MCF 10A (cell line): ENCODE measurements at regions of chr10 and their contacts with region 1.

Region 1: GRCh38 chr10:16828114-16828568 is 10.9 kb upstream of the RSU1 start:
- DNase-seq: peak; percentile 90
- H3K4me3 Mint-ChIP-seq: no peak overlapping the region
- H3K27ac Mint-ChIP-seq: no peak overlapping the region
- H3K4me1 Mint-ChIP-seq: peaks cover 19% of the 10 kb centered on the region
- H3K27me3 Mint-ChIP-seq: no peaks in the 10 kb centered on the region
- CTCF ChIP-seq: peak; percentile 53

Region 2: DNA sequence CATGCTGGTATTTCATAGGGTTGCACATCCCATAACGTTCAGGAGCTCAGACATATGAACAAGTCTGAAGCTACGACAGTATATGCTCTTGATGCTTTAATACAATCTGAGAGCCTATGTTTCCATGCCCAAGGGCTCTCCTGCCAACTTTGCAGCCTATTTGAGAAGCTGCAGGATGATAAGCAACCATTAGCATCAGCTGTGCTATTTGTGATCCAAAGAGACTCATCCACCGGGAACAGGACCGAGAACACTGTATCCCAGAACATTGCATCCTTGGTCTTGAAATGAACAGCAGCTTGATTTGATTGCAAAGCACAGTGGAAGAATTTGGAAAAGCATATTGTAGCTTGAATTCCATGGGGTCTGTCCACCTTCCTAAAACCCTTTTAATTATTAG is 547.5 kb before region 1 on chr10:
- CTCF ChIA-PET with region 1: no interaction called
- POLR2A ChIA-PET with region 1: no interaction called
- intact Hi-C with region 1: no loop called
- DNase-seq: no peak
- H3K4me3 Mint-ChIP-seq: no peak overlapping the region
- H3K27ac Mint-ChIP-seq: no peak overlapping the region
- H3K4me1 Mint-ChIP-seq: no peaks in the 10 kb centered on the region
- H3K27me3 Mint-ChIP-seq: no peaks in the 10 kb centered on the region
- CTCF ChIP-seq: no peak

Region 3: GRCh38 chr10:16770670-16771069 is 57.5 kb before region 1 on chr10:
- CTCF ChIA-PET with region 1: no interaction called
- POLR2A ChIA-PET with region 1: no interaction called
- intact Hi-C with region 1: no loop called
- DNase-seq: no peak
- H3K4me3 Mint-ChIP-seq: no peak overlapping the region
- H3K27ac Mint-ChIP-seq: no peak overlapping the region
- H3K4me1 Mint-ChIP-seq: no peaks in the 10 kb centered on the region
- H3K27me3 Mint-ChIP-seq: no peaks in the 10 kb centered on the region
- CTCF ChIP-seq: no peak

Region 4: DNA sequence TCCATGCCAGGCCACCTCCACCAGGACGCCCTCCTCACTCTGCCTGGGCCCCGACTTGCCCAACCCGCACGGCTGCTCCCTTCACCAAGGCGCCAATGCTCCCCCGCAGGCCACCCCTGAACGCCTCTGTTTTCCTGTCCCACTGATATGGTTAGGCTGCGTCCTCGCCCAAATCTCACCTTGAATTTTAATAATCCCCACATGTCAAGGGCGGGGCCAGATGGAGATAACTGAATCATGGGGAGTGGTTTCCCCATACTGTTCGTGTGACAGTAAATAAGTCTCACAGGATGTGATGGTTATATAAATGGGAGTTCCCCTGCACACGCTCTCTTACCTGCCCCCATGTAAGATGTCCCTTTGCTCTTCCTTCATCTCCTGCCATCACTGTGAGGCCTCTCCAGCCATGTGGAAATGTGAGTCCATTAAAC is 40.8 kb before region 1 on chr10:
- CTCF ChIA-PET with region 1: no interaction called
- POLR2A ChIA-PET with region 1: no interaction called
- intact Hi-C with region 1: no loop called
- DNase-seq: no peak
- H3K4me3 Mint-ChIP-seq: no peak overlapping the region
- H3K27ac Mint-ChIP-seq: no peak overlapping the region
- H3K4me1 Mint-ChIP-seq: peaks cover 7% of the 10 kb centered on the region
- H3K27me3 Mint-ChIP-seq: no peaks in the 10 kb centered on the region
- CTCF ChIP-seq: no peak

Region 5: DNA sequence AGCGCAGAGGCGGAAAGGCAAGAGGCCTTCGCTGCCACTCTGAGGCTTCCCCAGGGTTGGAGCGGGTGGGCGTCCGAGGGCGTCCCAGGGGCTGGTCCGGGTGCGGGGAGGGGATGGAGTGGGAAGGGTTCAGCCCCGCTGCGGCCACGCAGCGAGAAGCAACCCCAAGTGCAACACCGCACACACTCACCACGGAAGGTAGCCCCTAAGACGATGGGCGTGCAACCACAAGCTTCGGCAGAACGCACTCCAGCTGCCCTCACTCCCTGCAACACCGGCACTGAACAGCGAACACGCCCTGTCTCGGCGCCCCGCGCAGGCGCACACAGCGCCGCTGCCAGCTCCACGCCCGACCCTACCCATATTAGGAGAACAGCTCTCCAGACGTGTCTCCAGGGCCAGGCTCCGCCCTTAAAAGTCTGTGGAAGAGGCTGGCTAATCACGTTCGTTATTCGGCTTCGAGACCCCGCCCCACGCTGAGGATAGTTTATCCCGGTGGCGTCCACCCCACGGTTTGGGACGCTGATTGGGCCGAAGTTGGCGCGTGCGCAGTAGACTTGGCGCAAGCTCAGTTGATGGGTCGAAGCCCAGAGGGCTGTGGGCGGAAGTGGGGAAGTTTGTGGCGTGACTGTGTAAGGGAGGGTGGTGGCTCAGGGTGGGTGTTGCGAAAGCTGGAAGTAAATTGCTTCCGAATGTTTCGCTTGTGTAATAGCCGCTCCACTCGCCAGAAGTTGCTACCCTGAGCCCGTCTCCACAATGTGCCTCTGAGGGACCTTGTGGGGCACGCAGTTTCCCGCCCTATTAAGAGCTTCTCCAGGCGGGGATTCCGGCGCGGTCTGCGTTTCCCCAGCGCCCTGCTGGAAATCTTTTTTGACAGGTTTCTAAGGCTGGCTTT is 10.8 kb before region 1 on chr10 and contains the start of gene RSU1:
- CTCF ChIA-PET with region 1: interaction called, 12 read pairs
- POLR2A ChIA-PET with region 1: interaction called, 6 read pairs
- intact Hi-C with region 1: no loop called
- DNase-seq: peak; percentile 100
- H3K4me3 Mint-ChIP-seq: peak within 1 kb of the TSS; percentile 94
- H3K27ac Mint-ChIP-seq: peak within 1 kb of the TSS; percentile 74
- H3K4me1 Mint-ChIP-seq: peaks cover 17% of the 10 kb centered on the region
- H3K27me3 Mint-ChIP-seq: no peaks in the 10 kb centered on the region
- CTCF ChIP-seq: no peak
- total RNA-seq, gene RSU1: 50.5 and 54.4 TPM in 2 replicates

Region 6: GRCh38 chr10:17257466-17258321 is 429.6 kb after region 1 on chr10:
- CTCF ChIA-PET with region 1: interaction called, 42 read pairs
- POLR2A ChIA-PET with region 1: interaction called, 3 read pairs
- intact Hi-C with region 1: loop called (anchors 1 kb)
- DNase-seq: peak; percentile 78
- H3K4me3 Mint-ChIP-seq: peak overlapping the region; percentile 56
- H3K27ac Mint-ChIP-seq: no peak overlapping the region
- H3K4me1 Mint-ChIP-seq: peaks cover 6% of the 10 kb centered on the region
- H3K27me3 Mint-ChIP-seq: no peaks in the 10 kb centered on the region
- CTCF ChIP-seq: peak; percentile 68

Region 7: GRCh38 chr10:17273403-17273802 is 445.3 kb after region 1 on chr10:
- CTCF ChIA-PET with region 1: interaction called, 10 read pairs
- POLR2A ChIA-PET with region 1: no interaction called
- intact Hi-C with region 1: no loop called
- DNase-seq: peak; percentile 66
- H3K4me3 Mint-ChIP-seq: no peak overlapping the region
- H3K27ac Mint-ChIP-seq: peak overlapping the region; percentile 75
- H3K4me1 Mint-ChIP-seq: peaks cover 11% of the 10 kb centered on the region
- H3K27me3 Mint-ChIP-seq: no peaks in the 10 kb centered on the region
- CTCF ChIP-seq: no peak

Region 8: DNA sequence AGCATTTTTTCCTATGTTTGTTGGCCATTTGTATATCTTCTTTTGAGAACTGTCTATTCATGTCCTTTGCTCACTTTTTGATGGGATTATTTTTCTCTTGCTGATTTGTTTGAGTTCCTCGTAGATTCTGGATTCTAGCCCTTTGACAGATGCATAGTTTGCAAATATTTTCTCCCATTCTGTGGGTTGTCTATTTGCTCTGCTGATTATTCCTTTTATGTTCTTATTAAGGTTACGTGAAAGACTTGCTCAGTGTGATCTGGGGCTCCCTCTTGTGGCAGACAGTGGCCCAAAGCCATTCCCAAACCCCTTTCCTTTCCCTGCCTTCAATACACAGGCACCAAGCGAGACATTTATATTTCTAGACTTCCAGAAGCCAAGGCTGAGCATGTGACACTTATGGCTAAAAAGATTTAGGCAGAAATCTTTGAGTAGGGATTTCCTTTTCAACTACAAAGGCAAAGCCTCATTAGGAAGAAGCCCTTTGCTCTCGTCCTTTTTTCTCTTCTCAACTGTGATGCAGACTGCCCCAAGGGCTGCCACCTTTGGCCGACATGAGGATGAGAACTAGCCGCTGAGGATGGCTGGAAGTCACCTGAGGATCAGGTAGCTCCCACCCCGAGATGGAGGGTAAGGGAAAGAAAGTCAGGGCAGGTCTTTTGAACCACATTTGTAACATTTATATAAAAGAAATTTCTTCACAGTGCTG is 602.7 kb after region 1 on chr10:
- CTCF ChIA-PET with region 1: interaction called, 6 read pairs
- POLR2A ChIA-PET with region 1: no interaction called
- intact Hi-C with region 1: loop called (anchors 1 kb)
- DNase-seq: peak; percentile 78
- H3K4me3 Mint-ChIP-seq: no peak overlapping the region
- H3K27ac Mint-ChIP-seq: no peak overlapping the region
- H3K4me1 Mint-ChIP-seq: peaks cover 5% of the 10 kb centered on the region
- H3K27me3 Mint-ChIP-seq: no peaks in the 10 kb centered on the region
- CTCF ChIP-seq: peak; percentile 81

Region 9: GRCh38 chr10:17599089-17599488 is 770.9 kb after region 1 on chr10:
- CTCF ChIA-PET with region 1: no interaction called
- POLR2A ChIA-PET with region 1: no interaction called
- intact Hi-C with region 1: loop called (anchors 5 kb)
- DNase-seq: peak; percentile 53
- H3K4me3 Mint-ChIP-seq: no peak overlapping the region
- H3K27ac Mint-ChIP-seq: no peak overlapping the region
- H3K4me1 Mint-ChIP-seq: no peaks in the 10 kb centered on the region
- H3K27me3 Mint-ChIP-seq: no peaks in the 10 kb centered on the region
- CTCF ChIP-seq: peak; percentile 30